Activated CD4-positive, alpha-beta T cell treated with anti-CD3 and anti-CD28 coated beads for 36 hours (primary cell): ENCODE measurements at regions of chr16 and their contacts with region 1.

Region 1: DNA sequence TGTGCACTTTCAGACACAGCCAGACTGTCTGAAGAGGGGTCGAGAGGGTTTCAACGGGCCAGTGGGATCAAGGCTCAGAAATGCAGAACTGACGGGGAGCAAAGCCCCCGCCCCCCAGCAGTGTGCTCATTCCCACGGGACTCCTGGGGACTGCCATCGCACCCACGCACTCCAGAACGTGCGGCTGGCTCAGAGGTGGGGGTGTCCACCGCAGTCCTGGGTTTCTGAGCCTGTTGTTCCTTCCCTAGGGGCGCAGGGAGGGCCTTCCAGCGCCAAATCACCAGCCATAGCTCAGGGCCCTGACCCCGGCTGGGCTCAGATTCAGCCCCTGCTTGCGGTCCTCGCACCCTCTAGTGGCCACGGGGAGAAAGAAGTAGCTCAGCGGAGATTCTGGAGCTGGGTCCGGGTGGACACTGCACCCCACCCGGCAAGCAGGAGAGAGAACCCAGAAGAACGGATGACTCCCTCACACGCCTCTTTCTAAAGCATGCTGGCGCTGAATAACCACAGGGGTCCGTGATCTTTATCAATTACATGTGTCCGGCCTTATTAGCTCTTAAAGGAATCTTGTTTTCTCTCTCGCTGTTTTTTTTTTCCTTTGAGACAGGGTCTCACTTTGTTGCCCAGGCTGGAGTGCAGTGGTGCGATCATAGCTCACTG is 45.0 kb upstream of the USP7 start:
- DNase-seq: peak; percentile 84
- ATAC-seq: peak; percentile 96
- H3K4me3 Mint-ChIP-seq: no peak overlapping the region
- H3K27ac Mint-ChIP-seq: no peak overlapping the region
- H3K4me1 Mint-ChIP-seq: peaks cover 4% of the 10 kb centered on the region
- H3K27me3 Mint-ChIP-seq: peaks cover 10% of the 10 kb centered on the region

Region 2: GRCh38 chr16:8567750-8568617 is 440.7 kb before region 1 on chr16:
- CTCF ChIA-PET with region 1: no interaction called
- POLR2A ChIA-PET with region 1: no interaction called
- intact Hi-C with region 1: loop called in 1 of 2 experiments (anchors 1 kb)
- DNase-seq: peak; percentile 87
- ATAC-seq: peak; percentile 94
- H3K4me3 Mint-ChIP-seq: no peak overlapping the region
- H3K27ac Mint-ChIP-seq: no peak overlapping the region
- H3K4me1 Mint-ChIP-seq: peaks cover 4% of the 10 kb centered on the region
- H3K27me3 Mint-ChIP-seq: peaks cover 9% of the 10 kb centered on the region

Region 3: DNA sequence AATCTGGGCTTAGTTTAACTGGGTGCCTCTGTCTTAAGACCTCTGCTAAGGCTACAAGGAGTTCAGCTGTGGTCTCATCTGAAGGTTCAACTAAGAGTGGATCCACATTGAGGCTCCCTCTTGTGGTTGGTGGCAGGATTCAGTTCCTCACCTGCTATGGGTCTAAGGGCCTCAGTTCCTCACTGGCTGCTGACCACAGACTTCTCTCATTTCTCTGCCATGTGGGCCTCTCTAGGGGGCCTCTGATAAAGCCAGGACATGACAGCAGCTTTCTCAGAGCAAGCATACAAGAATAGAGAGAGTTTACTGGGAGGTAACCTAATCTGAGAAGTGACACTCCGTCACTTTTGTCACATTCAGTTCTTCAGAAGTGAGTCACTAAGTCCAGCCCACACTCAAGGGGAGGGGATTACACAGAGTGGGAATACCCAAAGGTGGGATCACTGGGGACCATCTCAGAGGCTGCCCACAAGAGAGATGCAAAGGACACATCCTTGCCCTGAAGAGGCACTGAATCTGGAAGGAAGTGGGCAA is 353.5 kb before region 1 on chr16:
- CTCF ChIA-PET with region 1: interaction called, 3 read pairs
- POLR2A ChIA-PET with region 1: no interaction called
- intact Hi-C with region 1: loop called in 1 of 2 experiments (anchors 10 kb)
- DNase-seq: peak; percentile 74
- ATAC-seq: peak; percentile 93
- H3K4me3 Mint-ChIP-seq: no peak overlapping the region
- H3K27ac Mint-ChIP-seq: no peak overlapping the region
- H3K4me1 Mint-ChIP-seq: peaks cover 17% of the 10 kb centered on the region
- H3K27me3 Mint-ChIP-seq: no peaks in the 10 kb centered on the region

Region 4: GRCh38 chr16:8905168-8905762 is 103.5 kb before region 1 on chr16:
- CTCF ChIA-PET with region 1: interaction called, 6 read pairs
- POLR2A ChIA-PET with region 1: no interaction called
- intact Hi-C with region 1: loop called (anchors 2 kb)
- DNase-seq: no peak
- ATAC-seq: peak; percentile 78
- H3K4me3 Mint-ChIP-seq: no peak overlapping the region
- H3K27ac Mint-ChIP-seq: peak overlapping the region; percentile 25
- H3K4me1 Mint-ChIP-seq: peaks cover 13% of the 10 kb centered on the region
- H3K27me3 Mint-ChIP-seq: no peaks in the 10 kb centered on the region

Region 5: GRCh38 chr16:8928467-8928957 is 80.2 kb before region 1 on chr16:
- CTCF ChIA-PET with region 1: no interaction called
- POLR2A ChIA-PET with region 1: no interaction called
- intact Hi-C with region 1: loop called in 1 of 2 experiments (anchors 5 kb)
- DNase-seq: peak; percentile 66
- ATAC-seq: peak; percentile 84
- H3K4me3 Mint-ChIP-seq: no peak overlapping the region
- H3K27ac Mint-ChIP-seq: peak overlapping the region; percentile 61
- H3K4me1 Mint-ChIP-seq: peaks cover 62% of the 10 kb centered on the region
- H3K27me3 Mint-ChIP-seq: no peaks in the 10 kb centered on the region